ENCODE measurements at regions of chr7 and their contacts with region 1.

Region 1: DNA sequence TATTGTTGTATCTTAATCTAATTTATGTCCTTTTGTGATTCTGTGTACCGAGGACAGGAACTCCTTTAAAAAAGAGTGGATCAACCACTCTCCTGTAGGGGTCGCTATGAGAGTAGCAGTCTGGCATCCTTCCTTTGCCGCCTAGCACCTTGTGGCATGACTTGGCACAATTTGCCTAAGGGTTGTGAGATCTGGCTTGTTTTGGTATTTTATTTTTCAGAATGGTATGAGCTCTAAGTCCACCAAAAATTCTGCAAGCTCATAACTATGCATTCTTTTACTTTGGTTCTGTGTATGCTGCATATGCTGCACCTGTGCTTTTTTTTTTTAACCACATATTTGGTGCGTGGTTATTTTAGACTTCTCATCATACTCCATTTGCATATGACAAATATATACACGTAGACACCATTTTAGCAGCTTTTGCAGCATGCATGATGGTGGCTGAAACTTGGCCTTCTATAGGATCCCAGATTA is 112.8 kb downstream of the CDK14 start:
- DNase-seq: no peak
- H3K4me3 ChIP-seq: no peak overlapping the region
- CTCF ChIP-seq: peak; percentile 2

Region 2: DNA sequence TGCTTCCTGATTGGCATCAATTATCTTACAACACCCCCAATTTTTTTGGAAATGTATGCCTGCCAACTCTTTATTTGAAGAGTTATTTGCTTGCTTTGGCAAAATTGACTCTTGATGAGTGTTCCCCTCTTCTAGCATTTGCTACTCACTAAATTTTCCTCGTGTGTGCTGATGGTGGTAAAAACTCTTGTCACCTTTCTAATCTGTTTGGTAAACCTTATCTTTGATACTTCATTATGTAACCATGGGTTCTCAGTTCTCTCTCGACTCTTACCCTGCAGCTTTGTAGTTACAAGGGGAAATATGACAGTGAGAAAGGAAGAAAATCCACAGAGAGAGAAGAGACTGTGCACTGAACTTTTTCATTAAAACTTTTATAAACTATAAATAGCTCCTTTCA is 10.3 kb before region 1 on chr7:
- CTCF ChIA-PET with region 1: interaction called, 13 read pairs
- POLR2A ChIA-PET with region 1: no interaction called
- DNase-seq: no peak
- H3K4me3 ChIP-seq: no peak overlapping the region
- CTCF ChIP-seq: no peak

Region 3: GRCh38 chr7:90777465-90777864 is 68.6 kb after region 1 on chr7:
- CTCF ChIA-PET with region 1: no interaction called
- POLR2A ChIA-PET with region 1: no interaction called
- DNase-seq: no peak
- H3K4me3 ChIP-seq: no peak overlapping the region
- CTCF ChIP-seq: no peak

Region 4: GRCh38 chr7:90900628-90901356 is 191.9 kb after region 1 on chr7:
- CTCF ChIA-PET with region 1: no interaction called
- POLR2A ChIA-PET with region 1: no interaction called
- DNase-seq: no peak
- H3K4me3 ChIP-seq: no peak overlapping the region
- CTCF ChIP-seq: no peak

Measured in AG04449 (cell line).